HEK293 (cell line): ENCODE measurements at regions of chr19 and their contacts with region 1.

Region 1: DNA sequence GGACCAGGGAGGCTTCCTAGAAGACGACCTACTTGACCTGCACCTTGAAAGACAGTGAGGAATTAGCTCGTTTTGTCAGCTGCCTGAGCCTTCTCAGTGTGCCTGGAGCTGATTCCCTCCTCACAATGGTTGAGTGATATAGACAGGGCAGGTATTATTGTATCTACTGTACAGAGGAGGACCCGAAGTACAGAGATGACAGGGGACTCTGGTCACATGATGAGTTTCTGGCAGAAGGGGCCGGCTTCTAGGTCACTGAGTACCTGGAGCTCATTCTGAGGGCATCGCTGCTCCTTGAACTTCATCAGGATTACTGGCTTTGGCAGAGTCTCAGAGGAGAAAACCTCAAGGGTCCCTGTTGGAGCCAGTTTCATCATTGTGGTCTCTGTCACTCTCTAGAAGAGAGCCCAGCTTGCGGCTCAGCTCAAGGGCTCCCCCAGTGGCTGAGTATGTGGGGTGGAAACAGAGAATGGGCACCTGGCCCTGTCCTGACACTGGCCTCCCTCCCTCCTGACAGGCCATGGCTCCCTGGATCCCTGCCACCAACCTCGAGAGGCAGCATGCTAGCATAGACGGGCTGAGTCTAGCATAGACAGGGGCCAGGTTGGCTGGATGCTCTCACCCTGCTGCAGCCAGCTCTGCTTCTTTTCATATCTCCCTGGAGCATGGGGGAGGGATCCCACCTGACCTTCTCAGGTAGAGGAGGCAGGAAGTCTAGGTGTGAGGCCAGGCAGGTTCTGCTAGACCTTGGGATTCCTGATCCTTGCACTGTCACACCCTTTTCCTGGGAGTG is 38.7 kb downstream of the NFIX start:
- H3K4me3 ChIP-seq: no peak overlapping the region
- H3K27ac ChIP-seq: no peak overlapping the region
- H3K4me1 ChIP-seq: peaks cover 29% of the 10 kb centered on the region
- CTCF ChIP-seq: peak; percentile 76

Region 2: GRCh38 chr19:12983542-12984142 is 50.4 kb before region 1 on chr19:
- CTCF ChIA-PET with region 1: interaction called, 54 read pairs
- POLR2A ChIA-PET with region 1: interaction called, 3 read pairs
- H3K4me3 ChIP-seq: peak overlapping the region; percentile 16
- H3K27ac ChIP-seq: no peak overlapping the region
- H3K4me1 ChIP-seq: no peaks in the 10 kb centered on the region
- CTCF ChIP-seq: peak; percentile 96

Region 3: DNA sequence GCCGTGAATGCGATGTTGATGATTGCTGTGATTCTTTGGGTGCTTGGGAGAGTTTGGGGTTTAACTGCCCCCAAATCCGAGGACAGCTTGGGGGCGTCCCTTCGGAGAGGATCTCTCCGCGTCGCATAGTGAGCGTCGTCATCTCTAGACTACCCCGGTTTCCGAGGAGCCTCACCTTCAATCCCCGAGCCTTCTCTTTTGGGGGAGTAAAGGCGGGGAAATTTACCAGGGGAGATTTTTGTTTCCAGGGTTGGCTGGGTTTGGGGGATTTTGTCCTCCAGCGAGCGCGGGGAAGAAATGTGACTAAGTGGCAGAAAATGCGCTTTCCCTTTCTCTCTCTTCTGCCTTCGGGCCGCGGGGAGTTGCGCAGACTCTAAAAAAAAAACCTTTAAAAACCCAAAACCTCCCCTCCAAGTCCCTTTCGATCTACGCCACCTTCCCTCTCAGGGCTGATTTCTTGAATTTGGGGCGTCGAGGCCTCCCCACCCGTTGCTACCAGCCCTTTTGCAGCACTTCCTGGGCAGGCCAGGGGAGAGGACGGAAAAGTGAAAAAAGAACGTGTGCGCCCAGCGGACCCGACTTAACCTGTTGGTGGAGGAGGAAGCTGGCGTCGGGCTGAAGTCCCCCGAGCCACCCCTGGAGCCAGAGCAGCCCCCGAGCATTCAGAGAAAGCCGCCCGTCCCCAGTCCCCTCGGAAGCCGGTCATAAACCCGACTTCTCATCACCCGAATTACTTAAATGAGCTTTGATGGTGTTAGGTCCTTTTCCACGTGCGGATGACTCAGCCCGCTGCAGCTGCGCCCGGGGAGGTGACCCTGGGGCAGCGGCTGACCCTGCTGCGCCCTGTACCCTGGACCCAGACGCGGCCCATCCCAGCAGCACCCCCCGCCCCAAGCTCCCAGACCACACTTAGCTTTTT is 21.1 kb before region 1 on chr19:
- CTCF ChIA-PET with region 1: interaction called, 56 read pairs
- POLR2A ChIA-PET with region 1: no interaction called
- H3K4me3 ChIP-seq: no peak overlapping the region
- H3K27ac ChIP-seq: no peak overlapping the region
- H3K4me1 ChIP-seq: peaks cover 9% of the 10 kb centered on the region
- CTCF ChIP-seq: no peak

Region 4: DNA sequence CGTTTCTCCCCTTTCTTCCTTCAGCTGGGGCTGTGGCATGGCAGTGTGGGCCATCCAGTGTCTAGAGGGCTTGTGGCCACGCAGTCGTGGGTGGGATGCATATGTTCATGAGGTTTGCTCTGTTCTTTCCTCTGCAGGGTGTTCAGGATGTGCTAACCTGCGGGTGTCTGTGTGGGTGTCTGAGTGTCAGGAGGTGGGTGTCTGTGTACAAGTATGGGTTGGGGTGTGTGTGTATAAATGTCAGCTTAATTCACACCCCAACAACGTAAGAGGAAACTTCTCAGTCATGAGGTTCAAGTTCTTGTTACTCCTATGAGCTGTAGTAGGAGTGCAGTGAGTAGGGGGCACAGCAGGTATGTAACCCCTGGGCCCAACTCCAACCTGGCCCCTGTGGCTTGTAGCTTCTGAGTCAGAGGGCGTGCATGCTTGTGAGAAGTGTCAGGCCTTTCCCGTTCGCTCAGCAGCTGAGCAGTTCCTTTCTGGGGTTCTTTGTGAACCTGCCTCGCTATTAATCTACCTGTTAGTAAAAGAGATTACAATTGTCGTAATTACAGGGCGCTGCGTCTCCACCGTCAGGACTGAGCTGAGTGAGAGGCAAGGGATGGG is 10.3 kb after region 1 on chr19:
- CTCF ChIA-PET with region 1: interaction called, 247 read pairs
- POLR2A ChIA-PET with region 1: interaction called, 3 read pairs
- H3K4me3 ChIP-seq: no peak overlapping the region
- H3K27ac ChIP-seq: no peak overlapping the region
- H3K4me1 ChIP-seq: no peaks in the 10 kb centered on the region
- CTCF ChIP-seq: no peak

Region 5: GRCh38 chr19:13082192-13083007 is 48.4 kb after region 1 on chr19:
- CTCF ChIA-PET with region 1: interaction called, 12 read pairs
- POLR2A ChIA-PET with region 1: no interaction called
- H3K4me3 ChIP-seq: no peak overlapping the region
- H3K27ac ChIP-seq: no peak overlapping the region
- H3K4me1 ChIP-seq: peaks cover 14% of the 10 kb centered on the region
- CTCF ChIP-seq: peak; percentile 18; the same call in 1 of the 2 replicates